HEK293 (cell line): ENCODE measurements at regions of chr3 and their contacts with region 1.

Region 1: GRCh38 chr3:184561061-184561912 is at the start of gene EPHB3:
- H3K4me3 ChIP-seq: peak within 1 kb of the TSS; percentile 66
- H3K27ac ChIP-seq: peak within 1 kb of the TSS; percentile 28; the same call in 1 of the 2 replicates
- H3K4me1 ChIP-seq: peaks cover 3% of the 10 kb centered on the region; the same call in 1 of the 2 replicates
- CTCF ChIP-seq: peak; percentile 97

Region 2: DNA sequence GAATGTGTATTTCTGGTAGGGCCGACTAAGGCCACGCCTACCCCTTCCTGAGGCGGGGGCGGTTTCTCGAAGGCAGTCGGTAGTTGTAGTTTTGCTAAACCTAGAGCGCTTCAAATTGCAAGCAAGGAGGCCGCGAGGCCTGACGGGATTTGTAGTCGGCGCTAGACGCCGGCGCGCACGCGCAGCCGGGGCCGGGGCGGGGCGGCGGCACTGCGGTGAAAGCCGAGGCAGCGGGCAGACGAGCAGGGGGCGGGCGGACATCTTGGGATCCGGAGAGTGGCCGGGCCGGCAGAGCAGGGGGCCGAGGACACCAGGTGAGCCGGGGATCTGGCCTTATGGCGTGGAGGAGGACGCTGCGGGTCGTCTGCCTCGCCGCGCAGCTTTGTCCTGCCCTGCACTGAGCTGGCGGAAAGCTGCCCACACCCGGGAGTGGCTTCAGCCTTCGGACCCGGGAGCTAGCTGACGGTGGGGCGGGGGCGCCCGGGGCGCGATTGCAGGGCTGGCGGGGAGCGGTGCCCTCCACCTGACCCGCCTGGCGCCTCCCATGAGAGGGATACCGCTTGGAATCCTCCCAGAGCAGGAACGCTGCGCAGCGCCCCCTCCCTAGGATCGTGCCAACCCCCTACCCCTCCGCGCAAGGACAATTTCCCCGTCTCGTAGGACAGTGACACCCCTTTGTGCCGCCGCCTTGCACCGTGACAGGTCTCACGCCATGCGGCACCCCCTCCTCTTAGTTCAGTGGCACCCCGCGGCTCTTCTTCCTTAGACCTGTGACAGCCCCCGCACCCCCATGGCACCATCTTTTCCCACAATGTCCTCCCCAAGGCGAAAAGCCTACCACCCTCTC is 386.4 kb before region 1 on chr3 and contains the start of gene AP2M1:
- CTCF ChIA-PET with region 1: no interaction called
- POLR2A ChIA-PET with region 1: no interaction called
- H3K4me3 ChIP-seq: peak within 1 kb of the TSS; percentile 96
- H3K27ac ChIP-seq: peak within 1 kb of the TSS; percentile 78
- H3K4me1 ChIP-seq: peaks cover 3% of the 10 kb centered on the region; the same call in 1 of the 2 replicates
- CTCF ChIP-seq: peak; percentile 74

Region 3: DNA sequence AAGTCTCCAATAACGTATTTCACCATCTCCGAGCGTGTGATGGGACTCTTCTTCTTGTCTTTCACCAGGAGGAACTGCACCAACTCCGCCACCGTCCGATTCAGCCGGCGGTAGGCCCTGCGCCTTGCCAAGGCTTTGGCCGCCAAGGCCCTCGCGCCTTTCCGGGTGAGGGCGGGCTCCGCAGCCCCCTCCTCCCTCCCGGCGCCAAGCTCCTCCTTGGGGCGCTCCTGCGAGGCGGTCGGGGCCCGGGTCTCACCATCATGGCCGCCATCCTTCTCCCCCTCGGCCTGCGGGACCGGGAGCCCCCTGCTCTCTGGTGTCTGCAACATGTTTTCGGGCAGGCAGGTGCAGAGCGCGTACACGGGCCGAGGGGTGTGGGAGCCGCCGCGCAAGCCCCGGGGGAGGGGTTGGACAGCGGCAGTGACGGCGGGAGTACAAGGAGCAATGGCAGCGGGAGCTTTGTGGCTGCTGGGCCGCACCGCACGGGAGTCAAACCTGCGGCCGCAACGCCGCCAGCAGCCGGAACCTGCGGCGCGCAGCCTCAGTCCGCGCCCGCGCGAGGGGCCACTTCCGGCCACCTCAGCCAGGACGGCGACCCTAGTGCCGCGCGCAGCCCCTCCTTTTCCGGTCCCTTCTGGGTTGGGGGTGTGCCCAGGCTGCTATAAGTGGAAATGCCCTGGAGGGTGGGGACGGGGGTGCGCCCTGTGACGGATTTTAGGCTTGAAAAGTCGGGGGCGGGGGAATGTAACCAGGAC is 150.4 kb after region 1 on chr3 and contains the start of gene MAGEF1:
- CTCF ChIA-PET with region 1: interaction called, 5 read pairs
- POLR2A ChIA-PET with region 1: interaction called, 10 read pairs
- H3K4me3 ChIP-seq: peak within 1 kb of the TSS; percentile 98
- H3K27ac ChIP-seq: peak within 1 kb of the TSS; percentile 91
- H3K4me1 ChIP-seq: peaks cover 5% of the 10 kb centered on the region
- CTCF ChIP-seq: no peak; the same call in none of the 2 replicates

Region 4: GRCh38 chr3:184727357-184728009 is 166.2 kb after region 1 on chr3:
- CTCF ChIA-PET with region 1: interaction called, 16 read pairs
- POLR2A ChIA-PET with region 1: interaction called, 4 read pairs
- H3K4me3 ChIP-seq: no peak overlapping the region
- H3K27ac ChIP-seq: no peak overlapping the region
- H3K4me1 ChIP-seq: no peaks in the 10 kb centered on the region
- CTCF ChIP-seq: 0 out of 2 replicates have a peak, but pooled peaks have one; percentile 29

Region 5: GRCh38 chr3:184740524-184741484 is 179.5 kb after region 1 on chr3:
- CTCF ChIA-PET with region 1: interaction called, 25 read pairs
- POLR2A ChIA-PET with region 1: interaction called, 4 read pairs
- H3K4me3 ChIP-seq: no peak overlapping the region
- H3K27ac ChIP-seq: no peak overlapping the region
- H3K4me1 ChIP-seq: no peaks in the 10 kb centered on the region
- CTCF ChIP-seq: no peak

Region 6: GRCh38 chr3:184777336-184778004 is 216.2 kb after region 1 on chr3:
- CTCF ChIA-PET with region 1: no interaction called
- POLR2A ChIA-PET with region 1: interaction called, 13 read pairs
- H3K4me3 ChIP-seq: no peak overlapping the region
- H3K27ac ChIP-seq: no peak overlapping the region
- H3K4me1 ChIP-seq: no peaks in the 10 kb centered on the region
- CTCF ChIP-seq: peak; percentile 60; the same call in 1 of the 2 replicates

Region 7: DNA sequence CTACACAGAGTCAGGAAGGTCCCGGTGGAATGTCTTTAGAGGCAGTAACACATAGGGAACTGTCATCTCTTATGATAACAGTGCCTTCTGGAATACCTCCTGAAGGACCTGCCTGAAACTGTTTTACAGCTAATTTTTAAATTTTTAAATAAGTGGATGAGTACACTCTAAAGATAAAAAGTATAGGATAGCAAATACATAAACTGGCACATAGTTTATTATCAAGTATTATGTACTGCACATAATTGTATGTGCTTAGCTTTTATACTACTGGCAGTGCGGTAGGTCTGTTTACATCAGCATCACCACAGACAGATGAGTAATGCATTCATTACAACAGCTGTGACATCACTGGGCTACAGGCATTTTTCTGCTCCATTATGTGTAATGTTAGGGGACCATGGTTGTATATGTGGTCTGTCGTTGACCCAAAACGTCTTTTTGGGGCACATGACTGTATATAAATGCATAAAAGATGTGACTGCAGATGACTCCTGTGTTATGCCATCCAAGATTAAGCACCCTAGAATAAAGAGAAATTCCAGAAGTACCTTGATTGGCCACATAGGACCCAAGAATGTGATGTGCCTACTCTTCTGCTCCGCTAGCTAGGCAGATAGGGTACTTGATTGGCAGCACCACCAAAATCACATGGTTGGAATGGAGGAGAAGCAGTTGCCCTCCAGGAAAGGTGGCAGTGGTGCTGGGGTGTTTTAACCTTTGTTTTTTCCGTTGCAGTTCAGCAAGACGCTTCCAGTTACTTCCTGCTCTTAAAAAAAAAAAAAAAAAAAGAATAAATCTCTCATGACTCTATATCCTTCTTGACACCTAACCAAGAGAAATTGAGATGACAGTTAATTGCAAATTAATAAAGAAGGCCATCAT is 254.0 kb after region 1 on chr3:
- CTCF ChIA-PET with region 1: interaction called, 10 read pairs
- POLR2A ChIA-PET with region 1: interaction called, 4 read pairs
- H3K4me3 ChIP-seq: no peak overlapping the region
- H3K27ac ChIP-seq: no peak overlapping the region
- H3K4me1 ChIP-seq: no peaks in the 10 kb centered on the region; the same call in 1 of the 2 replicates
- CTCF ChIP-seq: no peak